ENCODE measurements at regions of chr19 and their contacts with region 1.

Region 1: GRCh38 chr19:33771384-33772101 is 25.1 kb upstream of the KCTD15 start:
- DNase-seq: peak; percentile 41
- ATAC-seq: peak; percentile 93
- H3K4me3 ChIP-seq: no peak overlapping the region
- H3K27ac ChIP-seq: no peak overlapping the region
- H3K4me1 ChIP-seq: no peaks in the 10 kb centered on the region
- H3K27me3 ChIP-seq: peaks cover 4% of the 10 kb centered on the region; the same call in 1 of the 2 replicates
- CTCF ChIP-seq: peak; percentile 91
- POLR2A ChIP-seq: 0 out of 2 replicates have a peak, but pooled peaks have one; percentile 32
- RAD21 ChIP-seq: peak; percentile 98

Region 2: GRCh38 chr19:33235269-33235995 is 536.1 kb before region 1 on chr19:
- CTCF ChIA-PET with region 1: no interaction called
- POLR2A ChIA-PET with region 1: no interaction called
- dilution Hi-C with region 1: no loop called
- in situ Hi-C with region 1: loop called (anchors 10 kb)
- intact Hi-C with region 1: loop called (anchors 1 kb)
- DNase-seq: peak; percentile 55
- ATAC-seq: peak; percentile 91
- H3K4me3 ChIP-seq: no peak overlapping the region
- H3K27ac ChIP-seq: no peak overlapping the region
- H3K4me1 ChIP-seq: no peaks in the 10 kb centered on the region
- H3K27me3 ChIP-seq: peaks cover 22% of the 10 kb centered on the region; the same call in 1 of the 2 replicates
- CTCF ChIP-seq: peak; percentile 78
- POLR2A ChIP-seq: no peak
- RAD21 ChIP-seq: peak; percentile 84

Region 3: GRCh38 chr19:33416307-33417215 is 355.0 kb before region 1 on chr19:
- CTCF ChIA-PET with region 1: interaction called, 8 read pairs
- POLR2A ChIA-PET with region 1: no interaction called
- dilution Hi-C with region 1: no loop called
- in situ Hi-C with region 1: no loop called
- intact Hi-C with region 1: loop called (anchors 1 kb)
- DNase-seq: peak; percentile 68
- ATAC-seq: peak; percentile 90
- H3K4me3 ChIP-seq: no peak overlapping the region
- H3K27ac ChIP-seq: no peak overlapping the region
- H3K4me1 ChIP-seq: no peaks in the 10 kb centered on the region; the same call in 1 of the 2 replicates
- H3K27me3 ChIP-seq: no peaks in the 10 kb centered on the region
- CTCF ChIP-seq: peak; percentile 75
- POLR2A ChIP-seq: no peak
- RAD21 ChIP-seq: peak; percentile 71

Region 4: DNA sequence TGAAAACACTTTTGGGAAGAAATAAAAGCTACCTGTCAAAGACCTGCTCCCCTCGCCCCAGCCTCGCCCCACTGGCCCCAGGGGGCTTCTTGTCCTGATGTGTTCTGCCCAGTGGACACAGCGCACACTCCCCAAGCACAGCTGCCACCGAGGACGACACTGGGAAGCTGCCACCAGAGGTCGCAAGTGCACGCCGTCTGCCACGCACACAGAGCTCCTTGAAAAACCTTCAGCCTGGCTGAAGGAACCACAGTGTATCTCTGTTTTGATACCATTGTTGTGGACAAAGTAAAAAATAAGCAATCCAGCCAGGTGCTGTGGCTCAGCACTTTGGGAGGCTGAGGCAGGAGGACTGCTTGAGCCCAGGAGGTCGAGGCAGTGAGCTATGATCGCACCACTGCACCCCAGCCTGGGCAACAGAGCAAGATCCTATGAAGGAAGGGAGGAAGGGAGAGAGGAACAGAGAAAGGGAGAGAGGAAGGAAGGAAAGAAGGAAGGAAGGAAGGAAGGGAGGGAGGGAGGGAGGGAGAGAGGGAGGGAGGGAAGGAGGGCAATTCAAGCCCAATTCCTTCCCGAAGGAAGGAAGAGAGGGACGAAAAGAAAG is 340.8 kb before region 1 on chr19:
- CTCF ChIA-PET with region 1: interaction called, 10 read pairs
- POLR2A ChIA-PET with region 1: no interaction called
- dilution Hi-C with region 1: no loop called
- in situ Hi-C with region 1: loop called (anchors 5 kb)
- intact Hi-C with region 1: loop called (anchors 1 kb)
- DNase-seq: peak; percentile 61
- ATAC-seq: peak; percentile 94
- H3K4me3 ChIP-seq: no peak overlapping the region
- H3K27ac ChIP-seq: no peak overlapping the region
- H3K4me1 ChIP-seq: peaks cover 6% of the 10 kb centered on the region; the same call in 1 of the 2 replicates
- H3K27me3 ChIP-seq: no peaks in the 10 kb centered on the region
- CTCF ChIP-seq: peak; percentile 76
- POLR2A ChIP-seq: no peak
- RAD21 ChIP-seq: peak; percentile 85

Region 5: DNA sequence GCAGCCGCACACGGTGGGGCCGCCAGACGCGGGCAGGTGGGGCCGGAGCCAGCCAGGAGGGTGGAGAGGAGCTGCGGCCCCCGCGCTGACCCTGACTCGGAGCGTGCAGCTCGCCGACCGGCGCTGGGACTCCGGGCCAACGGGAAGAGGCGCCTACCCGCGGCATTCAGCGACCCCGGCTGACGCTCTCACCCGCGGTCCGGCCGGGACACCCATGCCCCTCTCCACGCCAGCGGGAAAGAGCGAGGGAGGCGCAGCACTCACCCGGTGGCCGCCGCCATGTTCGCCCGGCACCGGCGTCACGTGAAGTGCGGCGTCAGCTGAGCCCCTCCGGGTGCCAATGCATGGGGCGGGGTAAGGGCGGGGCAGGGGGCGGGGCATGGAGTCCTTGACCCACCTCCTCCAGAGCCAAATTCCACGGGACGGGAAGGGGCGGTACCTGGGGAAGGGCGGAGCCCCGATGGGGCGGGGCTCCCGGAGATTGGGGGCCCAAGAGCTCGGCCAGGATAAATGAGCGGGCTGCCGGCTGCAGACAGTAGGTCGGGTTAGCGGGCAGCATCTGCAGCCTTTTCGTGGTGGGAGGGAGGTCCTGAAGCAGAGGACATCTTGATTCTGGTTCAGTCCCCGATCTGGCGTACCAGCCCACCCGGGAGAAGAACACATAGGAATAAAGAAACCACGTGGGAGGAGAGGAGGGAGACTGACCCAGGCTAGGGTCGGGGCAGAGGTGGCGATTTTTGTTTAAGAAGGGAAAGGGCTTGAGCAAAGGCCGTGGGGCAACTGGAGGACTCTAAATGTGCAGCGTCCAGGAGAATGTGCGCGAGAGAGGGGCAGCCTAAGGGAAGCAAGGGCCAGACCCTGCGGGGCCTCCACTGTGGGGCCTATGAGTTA is 249.8 kb before region 1 on chr19 and contains the start of gene PEPD:
- CTCF ChIA-PET with region 1: no interaction called
- POLR2A ChIA-PET with region 1: no interaction called
- dilution Hi-C with region 1: no loop called
- in situ Hi-C with region 1: no loop called
- intact Hi-C with region 1: loop called (anchors 5 kb)
- DNase-seq: peak; percentile 82
- ATAC-seq: peak; percentile 100
- H3K4me3 ChIP-seq: peak within 1 kb of the TSS; percentile 92
- H3K27ac ChIP-seq: peak within 1 kb of the TSS; percentile 47; the same call in 1 of the 2 replicates
- H3K4me1 ChIP-seq: peaks cover 2% of the 10 kb centered on the region; the same call in 1 of the 2 replicates
- H3K27me3 ChIP-seq: peaks cover 3% of the 10 kb centered on the region; the same call in 1 of the 2 replicates
- CTCF ChIP-seq: no peak
- POLR2A ChIP-seq: peak; percentile 85
- RAD21 ChIP-seq: no peak
- total RNA-seq, gene PEPD: 36.7 and 41.1 TPM in 2 replicates

Measured in IMR-90 (cell line).